Dorsolateral prefrontal cortex (tissue), 120 donors: ENCODE measurements at regions of chr9 and their contacts with region 1.

Region 1: GRCh38 chr9:129177791-129178559 is at the start of gene IER5L:
- DNase-seq: peak; percentile 94 to 99 (median 98)
- H3K4me3 ChIP-seq: peak within 1 kb of the TSS; percentile 61 to 94 (median 84)
- H3K27ac ChIP-seq: peak within 1 kb of the TSS; percentile 62 to 100 (median 97)
- H3K27me3 ChIP-seq: no peaks in the 10 kb centered on the region
- CTCF ChIP-seq: peak in 29 of 56 donors; percentile 5 to 48 (median 25)
- total RNA-seq, gene IER5L: 4.7 to 34.0 (median 13.8) TPM

Region 2: GRCh38 chr9:128992995-128993394 is 185.0 kb before region 1 on chr9:
- intact Hi-C with region 1: no loop called
- DNase-seq: peak; percentile 63 to 86 (median 71)
- H3K4me3 ChIP-seq: peak overlapping the region in 5 of 59 donors; percentile 14 to 38 (median 23)
- H3K27ac ChIP-seq: peak overlapping the region in 53 of 59 donors; percentile 5 to 95 (median 61)
- H3K27me3 ChIP-seq: no peaks in the 10 kb centered on the region
- CTCF ChIP-seq: peak in 54 of 56 donors; percentile 28 to 76 (median 56)

Region 3: DNA sequence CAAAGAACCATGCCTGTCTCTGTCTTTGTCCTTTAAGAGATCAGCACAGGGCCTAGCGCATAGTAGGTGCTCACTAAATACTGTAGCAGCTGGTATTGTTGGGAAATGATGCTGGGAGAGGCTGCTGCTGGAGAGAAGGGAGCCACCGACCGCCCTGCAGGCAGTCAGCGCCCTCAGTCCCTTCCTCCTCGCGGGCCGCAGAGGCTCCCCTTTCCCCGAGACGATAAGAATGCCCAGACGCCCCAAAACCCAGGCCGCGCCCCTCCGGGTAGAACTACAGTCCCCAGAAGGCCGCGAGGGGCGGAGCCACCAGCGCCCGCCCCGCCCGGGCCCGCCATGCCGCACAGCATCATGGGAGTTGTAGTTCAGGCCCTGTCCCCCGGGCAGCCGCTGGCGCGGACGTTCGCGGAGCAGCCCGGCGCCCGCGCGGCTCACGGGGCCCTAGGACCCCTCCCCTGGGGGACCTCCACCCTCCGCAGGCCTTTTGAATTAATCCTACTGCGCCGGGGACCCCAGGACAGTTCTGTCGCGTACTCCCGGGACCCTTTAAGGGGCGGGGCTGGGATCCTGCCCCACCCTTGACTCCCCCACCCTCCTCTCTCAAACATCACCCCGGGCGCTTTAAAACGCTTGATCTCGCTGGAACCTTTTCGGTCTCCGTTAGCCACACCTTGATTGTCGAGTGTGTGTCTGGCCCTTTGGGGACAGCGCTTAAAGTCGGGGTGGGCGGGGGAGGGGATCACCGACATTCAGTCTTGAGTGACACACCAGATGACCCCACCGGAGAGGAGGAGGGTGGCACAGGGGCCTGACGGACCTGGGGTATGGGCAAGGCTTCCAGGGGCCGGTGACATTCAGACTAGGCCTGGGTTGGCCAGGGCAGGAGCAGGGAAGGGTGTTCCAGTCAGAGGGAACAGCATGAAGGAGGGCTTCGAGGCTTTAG is 24.9 kb after region 1 on chr9:
- intact Hi-C with region 1: loop called in 1 of 2 experiments (anchors 2 kb)
- DNase-seq: peak; percentile 82 to 94 (median 88)
- H3K4me3 ChIP-seq: peak overlapping the region; percentile 59 to 100 (median 83)
- H3K27ac ChIP-seq: peak overlapping the region; percentile 73 to 99 (median 95)
- H3K27me3 ChIP-seq: no peaks in the 10 kb centered on the region
- CTCF ChIP-seq: peak in 36 of 56 donors; percentile 8 to 56 (median 36)

Region 4: DNA sequence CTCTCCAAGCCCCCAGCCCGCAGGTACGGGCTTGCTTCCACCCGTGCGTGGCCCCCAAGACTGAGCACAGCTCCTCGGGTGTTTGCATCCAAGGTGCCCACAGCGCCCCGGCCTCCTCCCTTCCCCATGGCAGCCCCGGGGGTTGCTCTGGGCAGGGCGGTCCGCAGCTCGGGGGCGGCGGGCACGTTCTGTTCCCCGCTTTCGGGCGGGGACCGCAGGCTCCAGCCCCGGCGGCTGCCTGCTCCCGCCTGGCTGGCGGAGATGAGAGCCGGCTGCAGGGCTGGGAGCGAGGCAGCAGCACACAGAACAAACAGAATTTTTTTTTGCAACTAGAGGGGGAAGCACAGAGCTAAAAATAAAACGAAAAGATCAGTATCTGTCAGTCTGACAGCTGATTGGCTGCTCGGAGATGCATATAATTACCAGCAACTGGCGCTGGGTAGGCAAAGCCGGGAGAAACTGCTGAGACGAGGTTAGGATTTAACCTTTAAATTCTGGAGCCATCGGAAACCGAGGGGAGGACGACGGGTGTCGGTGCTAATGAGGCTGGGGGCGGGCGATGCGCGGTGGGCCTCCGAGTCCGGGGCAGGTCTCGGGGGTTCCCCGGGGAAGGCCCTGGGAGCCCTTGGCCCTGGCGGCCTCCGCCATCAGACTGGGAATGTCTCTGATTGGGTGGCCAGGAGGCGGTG is 142.7 kb after region 1 on chr9:
- intact Hi-C with region 1: loop called (anchors 5 kb)
- DNase-seq: peak in 9 of 10 donors; percentile 63 to 83 (median 73)
- H3K4me3 ChIP-seq: peak overlapping the region; percentile 27 to 72 (median 55)
- H3K27ac ChIP-seq: peak overlapping the region; percentile 42 to 99 (median 95)
- H3K27me3 ChIP-seq: no peaks in the 10 kb centered on the region
- CTCF ChIP-seq: peak in 44 of 56 donors; percentile 10 to 60 (median 40)

Region 5: GRCh38 chr9:129482521-129483414 is 304.8 kb after region 1 on chr9:
- intact Hi-C with region 1: loop called (anchors 5 kb)
- DNase-seq: peak in 9 of 10 donors; percentile 54 to 81 (median 77)
- H3K4me3 ChIP-seq: peak overlapping the region; percentile 43 to 78 (median 63)
- H3K27ac ChIP-seq: peak overlapping the region; percentile 74 to 100 (median 99)
- H3K27me3 ChIP-seq: no peaks in the 10 kb centered on the region
- CTCF ChIP-seq: peak in 13 of 56 donors; percentile 4 to 48 (median 16)